ENCODE measurements at regions of chr19 and their contacts with region 1.

Region 1: DNA sequence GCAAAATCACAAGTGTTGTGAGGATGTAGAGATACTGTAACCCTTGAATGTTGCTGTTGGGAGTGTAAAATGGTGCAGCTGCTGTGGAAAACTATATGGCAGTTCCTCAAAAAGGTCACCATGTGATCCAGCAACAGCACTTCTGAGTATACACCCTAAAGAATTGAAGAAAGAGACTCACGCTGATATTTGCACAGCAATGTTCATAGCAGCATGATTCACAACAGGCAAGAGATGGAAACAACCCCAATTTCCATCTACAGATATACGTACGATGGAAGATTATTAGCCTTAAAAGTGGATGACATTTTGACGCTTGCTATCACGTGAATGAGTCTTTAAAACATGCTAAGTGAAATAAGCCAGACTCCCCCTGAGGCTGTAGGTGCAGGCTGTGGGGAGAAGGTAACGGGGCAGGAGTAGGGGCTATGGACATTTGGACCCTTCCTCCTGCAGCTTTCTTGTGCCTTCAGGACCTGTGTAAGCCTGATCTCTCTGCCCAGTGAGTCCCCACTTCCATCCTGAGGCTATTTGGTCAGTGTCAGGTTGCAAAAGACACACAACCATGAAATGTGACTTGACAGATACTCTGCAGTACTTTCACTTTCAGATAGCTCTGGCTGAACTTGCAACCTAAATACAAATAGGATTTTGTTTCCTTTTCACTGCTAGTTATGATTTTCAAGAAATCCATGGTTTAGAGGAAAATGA is 17.6 kb upstream of the EID2 start:
- DNase-seq: no peak
- ATAC-seq: peak in 1 of 2 donors; percentile 83
- H3K4me3 ChIP-seq: no peak overlapping the region
- H3K27ac ChIP-seq: peak overlapping the region in 1 of 4 donors; percentile 58
- H3K4me1 ChIP-seq: no peaks in the 10 kb centered on the region
- H3K27me3 ChIP-seq: no peaks in the 10 kb centered on the region
- CTCF ChIP-seq: no peak
- POLR2A ChIP-seq: no peak

Region 2: DNA sequence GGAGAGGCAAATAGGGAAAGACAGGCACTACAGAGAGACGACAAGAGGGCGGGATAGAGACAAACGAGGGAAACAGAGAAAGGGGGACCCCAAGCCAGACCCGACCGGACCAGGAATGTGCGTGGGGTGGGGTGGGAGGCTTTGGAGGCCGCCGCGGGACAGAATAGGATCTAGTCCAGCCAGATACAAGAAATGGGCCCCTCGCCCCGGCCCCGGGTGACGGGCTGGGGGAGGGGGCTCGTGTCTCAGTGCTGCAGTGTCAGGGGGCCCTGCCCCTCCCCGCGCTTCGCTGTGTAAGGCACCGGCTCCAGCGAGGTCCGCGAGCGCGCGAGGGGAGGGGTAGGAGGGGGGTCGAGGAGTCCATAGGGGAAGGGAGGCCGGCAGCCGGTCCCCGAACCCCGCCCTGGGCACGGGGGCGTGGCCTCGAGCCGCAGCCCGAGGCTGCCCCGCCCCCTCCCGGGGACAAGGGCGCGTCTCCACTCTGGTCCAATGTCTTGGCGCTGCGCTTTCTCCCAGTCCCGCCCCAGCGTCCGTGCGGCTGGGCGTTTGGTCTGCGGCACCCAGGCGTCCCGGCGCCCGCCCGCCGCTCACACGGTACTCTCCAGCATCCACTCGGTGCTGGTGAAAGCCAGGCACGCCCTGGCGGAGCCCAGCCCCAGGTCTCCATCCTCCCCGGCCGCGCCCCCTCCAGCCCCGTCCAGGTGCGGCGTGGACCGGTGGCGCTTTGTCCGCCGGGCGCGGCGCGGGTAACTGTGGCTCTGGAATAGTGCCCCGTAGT is 250.4 kb before region 1 on chr19:
- in situ Hi-C with region 1: no loop called
- intact Hi-C with region 1: no loop called
- DNase-seq: no peak
- ATAC-seq: no peak
- H3K4me3 ChIP-seq: peak overlapping the region in 1 of 4 donors; percentile 17
- H3K27ac ChIP-seq: no peak overlapping the region
- H3K4me1 ChIP-seq: no peaks in the 10 kb centered on the region
- H3K27me3 ChIP-seq: peaks cover 42 to 66% (median 63%) of the 10 kb centered on the region in 3 donors
- CTCF ChIP-seq: no peak
- POLR2A ChIP-seq: no peak

Region 3: GRCh38 chr19:39412100-39412866 is 145.3 kb before region 1 on chr19 and contains the start of gene PLEKHG2:
- in situ Hi-C with region 1: no loop called
- intact Hi-C with region 1: no loop called
- DNase-seq: peak; percentile 97 to 98
- ATAC-seq: peak; percentile 63 to 73
- H3K4me3 ChIP-seq: peak within 1 kb of the TSS; percentile 81 to 99 (median 94)
- H3K27ac ChIP-seq: peak within 1 kb of the TSS; percentile 98 to 100 (median 100)
- H3K4me1 ChIP-seq: peaks cover 15 to 19% of the 10 kb centered on the region in 2 donors
- H3K27me3 ChIP-seq: no peaks in the 10 kb centered on the region
- CTCF ChIP-seq: peak; percentile 90 to 98 (median 97)
- POLR2A ChIP-seq: peak; percentile 70 to 87
- total RNA-seq, gene PLEKHG2: 1.3 to 3.6 (median 3.3) TPM

Region 4: DNA sequence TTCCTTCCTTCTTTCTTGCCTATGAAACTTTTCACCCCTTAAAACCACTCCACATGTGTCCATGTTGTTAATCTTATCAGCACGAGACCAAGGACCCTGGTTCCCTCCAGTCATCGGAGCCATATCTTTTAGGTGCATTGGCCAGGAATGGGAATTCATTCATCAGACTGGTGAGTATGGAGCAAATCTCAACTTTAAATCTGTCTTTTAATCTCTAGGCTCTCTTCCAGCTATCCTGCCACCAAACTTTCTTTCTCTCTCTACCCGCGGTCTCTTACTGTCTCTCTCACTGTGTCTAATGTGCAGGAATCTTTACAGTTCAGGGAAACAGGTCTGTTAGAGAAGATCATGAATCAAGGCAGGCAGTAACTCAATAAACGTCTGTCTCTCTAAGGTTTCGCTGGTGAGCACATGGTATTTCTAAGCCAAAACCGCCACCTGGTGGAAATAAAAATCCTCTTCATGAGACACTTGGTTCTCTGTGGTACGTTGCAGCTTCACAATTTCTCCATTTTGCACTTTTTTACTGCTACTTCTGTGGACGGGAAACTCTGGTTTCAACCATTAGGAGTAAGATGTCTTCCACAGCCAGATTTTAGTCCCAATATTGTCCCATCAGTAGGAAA is 114.3 kb after region 1 on chr19:
- in situ Hi-C with region 1: loop called in 3 of 4 experiments (anchors 5 to 10 kb)
- intact Hi-C with region 1: no loop called
- DNase-seq: no peak
- ATAC-seq: peak; percentile 69 to 72
- H3K4me3 ChIP-seq: no peak overlapping the region
- H3K27ac ChIP-seq: no peak overlapping the region
- H3K4me1 ChIP-seq: no peaks in the 10 kb centered on the region
- H3K27me3 ChIP-seq: peaks cover 0 to under 1% (median 0%) of the 10 kb centered on the region in 3 donors
- CTCF ChIP-seq: peak; percentile 54 to 65 (median 62)
- POLR2A ChIP-seq: no peak

Region 5: GRCh38 chr19:39679056-39679790 is 121.6 kb after region 1 on chr19:
- in situ Hi-C with region 1: loop called in 3 of 4 experiments (anchors 5 to 10 kb)
- intact Hi-C with region 1: no loop called
- DNase-seq: peak; percentile 55 to 75
- ATAC-seq: peak; percentile 86 to 89
- H3K4me3 ChIP-seq: peak overlapping the region; percentile 19 to 36 (median 26)
- H3K27ac ChIP-seq: peak overlapping the region; percentile 85 to 95 (median 92)
- H3K4me1 ChIP-seq: peaks cover 19 to 30% of the 10 kb centered on the region in 2 donors
- H3K27me3 ChIP-seq: no peaks in the 10 kb centered on the region
- CTCF ChIP-seq: no peak
- POLR2A ChIP-seq: peak in 1 of 2 donors; percentile 50

Region 6: GRCh38 chr19:39846176-39846677 is 288.6 kb after region 1 on chr19 and contains the start of gene FBL:
- in situ Hi-C with region 1: loop called in 1 of 4 experiments (anchors 10 kb)
- intact Hi-C with region 1: no loop called
- DNase-seq: peak; percentile 86 to 93
- ATAC-seq: peak; percentile 88 to 91
- H3K4me3 ChIP-seq: peak within 1 kb of the TSS; percentile 78 to 99 (median 88)
- H3K27ac ChIP-seq: peak within 1 kb of the TSS; percentile 93 to 96 (median 96)
- H3K4me1 ChIP-seq: peaks cover 38 to 50% of the 10 kb centered on the region in 2 donors
- H3K27me3 ChIP-seq: no peaks in the 10 kb centered on the region
- CTCF ChIP-seq: no peak
- POLR2A ChIP-seq: peak; percentile 72 to 75
- total RNA-seq, gene FBL: 40.4 to 79.4 (median 67.0) TPM